ENCODE measurements at regions of chr5 and their contacts with region 1.

Region 1: DNA sequence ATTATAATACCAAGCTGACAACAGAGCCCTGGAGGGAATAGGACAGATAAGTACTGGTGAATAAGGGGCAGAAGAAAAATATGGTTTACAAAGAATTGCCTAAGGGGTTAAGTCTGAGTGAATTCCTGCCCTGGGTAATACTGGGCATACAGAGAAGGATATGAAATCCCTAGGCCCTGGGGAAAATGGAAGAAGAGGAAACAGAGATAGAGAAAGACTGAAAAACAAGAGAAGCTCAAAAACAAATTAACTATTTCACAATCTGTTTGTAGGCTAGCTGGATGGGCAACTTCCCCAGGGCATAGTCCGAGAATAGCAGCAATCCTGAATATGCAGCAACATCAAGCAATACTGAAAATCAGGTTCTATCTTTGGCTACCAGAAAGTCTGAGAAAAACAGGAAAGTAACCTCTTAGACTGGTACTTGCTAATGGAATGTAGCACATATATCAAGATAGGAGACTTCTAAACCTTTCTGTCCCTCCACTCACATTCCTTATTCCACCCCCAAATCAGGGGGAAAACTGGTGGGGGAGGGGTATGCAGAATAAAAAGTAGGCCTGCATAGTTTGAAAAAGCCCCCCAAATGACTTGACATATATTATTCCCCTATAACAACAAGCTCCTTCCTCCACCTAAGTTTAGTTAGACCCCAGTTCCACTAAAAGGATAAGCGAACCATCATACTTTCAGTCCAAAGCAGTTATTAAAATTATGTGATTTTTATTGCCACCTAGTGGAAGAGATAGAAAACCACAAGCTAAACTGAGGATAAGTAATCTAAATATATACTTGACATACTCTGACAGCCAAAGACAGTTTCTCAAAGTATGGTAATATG is 20.6 kb downstream of the SLC38A9 start:
- DNase-seq: no peak
- H3K4me3 Mint-ChIP-seq: no peak overlapping the region
- H3K27ac Mint-ChIP-seq: no peak overlapping the region
- H3K4me1 Mint-ChIP-seq: peaks cover 3% of the 10 kb centered on the region
- H3K27me3 Mint-ChIP-seq: no peaks in the 10 kb centered on the region

Region 2: GRCh38 chr5:55324815-55325418 is 366.6 kb before region 1 on chr5:
- CTCF ChIA-PET with region 1: interaction called, 6 read pairs
- intact Hi-C with region 1: loop called (anchors 1 kb)
- DNase-seq: no peak
- H3K4me3 Mint-ChIP-seq: no peak overlapping the region
- H3K27ac Mint-ChIP-seq: no peak overlapping the region
- H3K4me1 Mint-ChIP-seq: peaks cover 22% of the 10 kb centered on the region
- H3K27me3 Mint-ChIP-seq: no peaks in the 10 kb centered on the region

Region 3: GRCh38 chr5:55344392-55344992 is 347.0 kb before region 1 on chr5:
- CTCF ChIA-PET with region 1: interaction called, 14 read pairs
- intact Hi-C with region 1: loop called (anchors 1 kb)
- DNase-seq: peak; percentile 84
- H3K4me3 Mint-ChIP-seq: no peak overlapping the region
- H3K27ac Mint-ChIP-seq: no peak overlapping the region
- H3K4me1 Mint-ChIP-seq: peaks cover 7% of the 10 kb centered on the region
- H3K27me3 Mint-ChIP-seq: no peaks in the 10 kb centered on the region

Region 4: GRCh38 chr5:55407059-55407684 is 284.3 kb before region 1 on chr5:
- CTCF ChIA-PET with region 1: interaction called, 18 read pairs
- intact Hi-C with region 1: loop called (anchors 1 kb)
- DNase-seq: peak; percentile 25
- H3K4me3 Mint-ChIP-seq: no peak overlapping the region
- H3K27ac Mint-ChIP-seq: no peak overlapping the region
- H3K4me1 Mint-ChIP-seq: peaks cover 4% of the 10 kb centered on the region
- H3K27me3 Mint-ChIP-seq: no peaks in the 10 kb centered on the region

Region 5: GRCh38 chr5:55680353-55680752 is 11.1 kb before region 1 on chr5:
- CTCF ChIA-PET with region 1: no interaction called
- intact Hi-C with region 1: no loop called
- DNase-seq: no peak
- H3K4me3 Mint-ChIP-seq: no peak overlapping the region
- H3K27ac Mint-ChIP-seq: no peak overlapping the region
- H3K4me1 Mint-ChIP-seq: no peaks in the 10 kb centered on the region
- H3K27me3 Mint-ChIP-seq: no peaks in the 10 kb centered on the region

Region 6: GRCh38 chr5:55923177-55923771 is 231.8 kb after region 1 on chr5:
- CTCF ChIA-PET with region 1: interaction called, 3 read pairs
- intact Hi-C with region 1: loop called (anchors 2 kb)
- DNase-seq: peak; percentile 46
- H3K4me3 Mint-ChIP-seq: peak overlapping the region; percentile 78
- H3K27ac Mint-ChIP-seq: peak overlapping the region; percentile 64
- H3K4me1 Mint-ChIP-seq: peaks cover 21% of the 10 kb centered on the region
- H3K27me3 Mint-ChIP-seq: peaks cover 2% of the 10 kb centered on the region

Measured in activated naive CD4-positive, alpha-beta T cell treated with anti-CD3 and anti-CD28 coated beads for 36 hours (primary cell).